HCT116 (cell line): ENCODE measurements at regions of chr19 and their contacts with region 1.

Region 1: DNA sequence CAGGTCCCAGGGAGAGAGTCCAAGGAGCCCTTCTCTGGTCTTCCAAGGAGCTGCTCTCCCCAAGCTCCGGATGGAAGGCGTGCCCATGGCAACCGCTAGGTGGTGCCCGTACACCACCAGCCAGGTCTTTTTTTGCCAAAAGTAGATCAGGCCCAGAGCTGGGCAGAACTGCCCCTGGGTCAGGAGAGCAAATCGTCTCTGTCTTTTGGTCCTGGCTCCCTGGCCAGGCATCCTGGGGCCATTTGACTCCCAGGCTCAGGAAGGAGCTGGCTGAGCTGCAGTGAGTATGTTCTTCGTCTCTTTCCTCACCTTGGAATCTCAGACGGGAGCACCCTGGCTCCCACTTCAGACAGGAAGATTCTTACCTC is 24.6 kb upstream of the BCL3 start:
- DNase-seq: peak; percentile 68
- ATAC-seq: peak; percentile 89
- H3K4me3 ChIP-seq: no peak overlapping the region
- H3K27ac ChIP-seq: peak overlapping the region; percentile 14; the same call in 1 of the 2 replicates
- H3K4me1 ChIP-seq: peaks cover 38 to 58% of the 10 kb centered on the region in 2 experiments
- H3K27me3 ChIP-seq: no peaks in the 10 kb centered on the region
- CTCF ChIP-seq: peak; percentile 94 to 99 (median 95)
- POLR2A ChIP-seq: no peak
- RAD21 ChIP-seq: peak; percentile 100

Region 2: GRCh38 chr19:44576843-44577565 is 146.9 kb before region 1 on chr19:
- CTCF ChIA-PET with region 1: interaction called, 11 read pairs
- POLR2A ChIA-PET with region 1: no interaction called
- RAD21 ChIA-PET with region 1: no interaction called
- intact Hi-C with region 1: no loop called
- DNase-seq: peak; percentile 39
- ATAC-seq: peak; percentile 97
- H3K4me3 ChIP-seq: no peak overlapping the region
- H3K27ac ChIP-seq: no peak overlapping the region
- H3K4me1 ChIP-seq: peaks cover 0 to 3% of the 10 kb centered on the region in 2 experiments; a peak in 1 of 4 replicates
- H3K27me3 ChIP-seq: no peaks in the 10 kb centered on the region
- CTCF ChIP-seq: peak; percentile 84 to 91 (median 85)
- POLR2A ChIP-seq: no peak
- RAD21 ChIP-seq: peak; percentile 89

Region 3: GRCh38 chr19:44741841-44742352 is 18.0 kb after region 1 on chr19:
- CTCF ChIA-PET with region 1: interaction called, 25 read pairs
- POLR2A ChIA-PET with region 1: no interaction called
- RAD21 ChIA-PET with region 1: interaction called, 6 read pairs
- intact Hi-C with region 1: no loop called
- DNase-seq: peak; percentile 98
- ATAC-seq: peak; percentile 83
- H3K4me3 ChIP-seq: peak overlapping the region; percentile 13 to 44
- H3K27ac ChIP-seq: peak overlapping the region; percentile 95
- H3K4me1 ChIP-seq: peaks cover 88 to 96% of the 10 kb centered on the region in 2 experiments
- H3K27me3 ChIP-seq: no peaks in the 10 kb centered on the region
- CTCF ChIP-seq: no peak
- POLR2A ChIP-seq: peak; percentile 33
- RAD21 ChIP-seq: no peak; the same call in 1 of the 2 replicates

Region 4: DNA sequence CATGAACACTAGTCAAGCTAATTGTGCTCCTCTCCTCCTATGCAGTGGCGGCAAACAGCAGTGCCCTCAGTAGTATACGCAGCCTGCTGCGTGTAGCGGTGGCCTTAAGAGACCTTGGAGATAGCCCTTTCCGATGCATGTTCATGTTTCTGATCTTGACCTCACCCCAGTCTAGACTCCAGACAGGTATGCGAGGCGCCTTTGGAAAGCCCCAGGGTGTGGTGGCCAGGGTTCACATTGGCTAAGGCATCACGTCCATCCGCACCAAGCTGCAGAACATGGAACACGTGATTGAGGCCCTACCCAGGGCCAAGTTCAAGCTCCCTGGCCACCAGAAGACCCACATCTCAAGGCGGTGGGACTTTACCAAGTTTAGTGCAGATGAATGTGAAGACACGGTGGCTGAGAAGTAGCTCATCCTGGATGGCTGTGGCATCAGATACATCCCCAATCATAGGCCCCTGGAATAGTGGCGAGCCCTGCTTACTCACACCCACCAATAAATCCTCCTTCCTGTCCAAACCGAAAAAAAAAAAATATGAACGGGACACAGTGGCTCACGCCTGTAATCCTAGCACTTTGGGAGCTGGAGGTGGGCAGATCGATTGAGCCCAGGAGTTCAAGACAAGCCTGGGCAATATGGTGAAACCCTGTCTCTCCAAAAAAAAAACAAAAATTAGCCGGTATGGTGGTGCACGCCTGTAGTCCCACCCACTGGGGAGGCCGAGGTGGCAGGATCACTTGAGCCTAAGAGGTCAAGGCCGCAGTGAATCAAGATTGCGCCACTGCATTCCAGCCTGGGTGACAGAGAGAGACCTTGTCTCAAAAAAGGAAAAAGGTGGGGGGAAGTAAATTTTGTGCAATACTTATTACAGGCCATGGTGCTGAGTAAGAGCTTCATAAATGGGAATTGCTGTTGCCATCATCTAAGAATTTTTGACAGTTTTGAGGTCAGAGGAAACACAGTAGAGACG is 41.3 kb after region 1 on chr19:
- CTCF ChIA-PET with region 1: interaction called, 219 read pairs
- POLR2A ChIA-PET with region 1: interaction called, 17 read pairs
- RAD21 ChIA-PET with region 1: interaction called, 75 read pairs
- intact Hi-C with region 1: loop called (anchors 1 kb)
- DNase-seq: no peak
- ATAC-seq: no peak
- H3K4me3 ChIP-seq: no peak overlapping the region
- H3K27ac ChIP-seq: no peak overlapping the region
- H3K4me1 ChIP-seq: peaks cover 1 to 23% of the 10 kb centered on the region in 2 experiments; a peak in 3 of 4 replicates
- H3K27me3 ChIP-seq: no peaks in the 10 kb centered on the region
- CTCF ChIP-seq: no peak
- POLR2A ChIP-seq: no peak
- RAD21 ChIP-seq: no peak

Region 5: GRCh38 chr19:44808463-44809371 is 84.8 kb after region 1 on chr19 and contains the start of gene BCAM:
- CTCF ChIA-PET with region 1: interaction called, 14 read pairs
- POLR2A ChIA-PET with region 1: interaction called, 3 read pairs
- RAD21 ChIA-PET with region 1: interaction called, 4 read pairs
- intact Hi-C with region 1: no loop called
- DNase-seq: no peak
- ATAC-seq: peak; percentile 60
- H3K4me3 ChIP-seq: peak within 1 kb of the TSS; percentile 75 to 85
- H3K27ac ChIP-seq: peak within 1 kb of the TSS; percentile 89
- H3K4me1 ChIP-seq: peaks cover 34 to 45% of the 10 kb centered on the region in 2 experiments
- H3K27me3 ChIP-seq: no peaks in the 10 kb centered on the region
- CTCF ChIP-seq: no peak
- POLR2A ChIP-seq: peak; percentile 44
- RAD21 ChIP-seq: no peak
- total RNA-seq, gene BCAM: 78.7 TPM

Region 6: DNA sequence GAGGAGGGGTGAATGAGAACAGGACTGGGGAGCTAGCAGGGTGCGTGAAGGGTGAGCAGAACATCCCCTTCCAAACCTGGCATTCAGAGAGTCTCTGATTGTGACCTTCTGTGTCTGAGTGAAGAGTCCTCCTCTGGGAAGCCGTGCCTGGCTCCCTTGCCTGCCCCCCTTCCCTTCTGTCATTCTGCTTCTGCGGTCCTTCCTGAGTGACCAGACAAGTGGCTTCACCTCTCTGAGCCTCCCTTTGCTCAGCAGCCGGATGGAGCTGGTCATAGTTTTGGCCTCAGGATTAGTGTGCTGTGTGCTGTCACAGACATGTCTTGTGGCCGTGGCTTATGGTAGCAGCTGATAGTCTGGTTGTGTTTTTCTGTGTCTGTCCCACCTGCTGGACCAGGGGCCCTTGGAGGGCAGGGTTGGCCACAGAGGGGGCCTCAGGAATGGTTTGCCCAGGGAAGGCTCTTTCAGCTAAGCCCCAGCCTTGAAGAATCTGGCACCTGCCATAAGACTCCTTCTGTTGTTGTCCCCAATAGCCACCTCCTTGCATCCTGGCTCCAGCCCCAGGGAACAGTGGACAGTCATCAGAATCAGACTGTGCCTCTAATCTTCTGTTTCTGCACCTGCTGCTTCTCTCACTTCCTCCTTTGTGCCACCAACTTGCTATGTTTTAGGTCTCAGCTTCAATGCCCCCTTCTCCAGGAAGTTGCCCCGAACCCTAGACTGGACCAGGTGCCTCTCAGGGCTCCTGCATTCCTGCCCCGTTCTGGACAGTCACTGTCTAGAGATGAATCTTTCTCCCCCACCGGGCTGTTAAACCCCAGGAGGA is 237.2 kb after region 1 on chr19:
- CTCF ChIA-PET with region 1: no interaction called
- POLR2A ChIA-PET with region 1: no interaction called
- RAD21 ChIA-PET with region 1: no interaction called
- intact Hi-C with region 1: no loop called
- DNase-seq: no peak
- ATAC-seq: no peak
- H3K4me3 ChIP-seq: no peak overlapping the region
- H3K27ac ChIP-seq: no peak overlapping the region
- H3K4me1 ChIP-seq: peaks cover 3 to 12% of the 10 kb centered on the region in 2 experiments; a peak in 3 of 4 replicates
- H3K27me3 ChIP-seq: no peaks in the 10 kb centered on the region
- CTCF ChIP-seq: no peak
- POLR2A ChIP-seq: no peak
- RAD21 ChIP-seq: no peak